Calu3 (cell line): ENCODE measurements at regions of chr6 and their contacts with region 1.

Region 1: DNA sequence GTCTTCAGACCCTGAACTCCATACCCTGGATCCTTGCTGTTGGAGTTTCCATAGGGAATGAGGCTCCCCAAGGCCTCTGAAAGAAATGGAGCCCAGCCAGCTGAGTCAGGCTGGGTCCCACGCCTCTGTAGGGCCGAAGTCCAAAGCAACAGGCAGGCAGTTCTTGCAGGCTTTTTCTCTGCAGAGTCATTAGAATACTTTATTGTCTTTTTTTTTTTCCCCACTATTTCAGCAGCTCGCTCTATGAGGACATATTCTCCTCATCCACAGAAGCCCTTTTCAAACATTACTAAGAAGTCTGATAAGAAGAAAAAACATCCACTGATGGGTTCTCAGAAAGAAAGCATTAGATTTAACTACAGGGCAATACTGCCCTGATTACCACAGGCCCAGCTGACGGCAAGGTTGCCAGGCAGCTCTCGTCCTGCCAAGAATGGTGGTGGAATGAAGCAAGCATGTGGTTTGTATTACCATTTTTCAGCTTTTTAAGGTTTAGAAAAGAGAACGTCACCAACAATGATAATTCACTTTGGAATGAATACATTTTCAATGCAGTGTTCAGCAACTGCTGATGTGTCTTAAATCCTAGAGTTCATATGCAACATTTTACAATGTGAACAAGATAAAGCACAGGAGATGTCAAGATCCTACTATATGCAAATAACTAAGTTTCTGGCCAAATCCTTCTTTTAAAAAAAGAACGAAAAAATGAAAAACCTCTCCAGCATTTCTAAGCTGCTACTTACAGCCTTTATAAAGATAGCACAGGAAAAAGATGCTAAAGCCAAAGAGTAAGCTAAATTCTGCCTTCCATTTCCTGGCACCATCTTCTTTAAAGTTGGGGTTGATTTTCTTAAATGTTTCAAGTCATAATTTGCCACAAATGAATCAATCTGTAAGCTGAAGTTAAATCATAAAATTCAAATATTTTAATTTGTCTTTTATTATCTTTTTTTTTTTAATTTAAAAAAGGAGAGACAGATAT is 223.6 kb upstream of the CITED2 start:
- DNase-seq: peak; percentile 11
- H3K4me3 Mint-ChIP-seq: no peak overlapping the region
- H3K27ac Mint-ChIP-seq: peak overlapping the region; percentile 56
- H3K4me1 Mint-ChIP-seq: peaks cover 12% of the 10 kb centered on the region
- H3K27me3 Mint-ChIP-seq: no peaks in the 10 kb centered on the region
- CTCF ChIP-seq: no peak

Region 2: GRCh38 chr6:139699335-139699734 is 101.3 kb after region 1 on chr6:
- CTCF ChIA-PET with region 1: interaction called, 3 read pairs
- intact Hi-C with region 1: loop called (anchors 10 kb)
- DNase-seq: no peak
- H3K4me3 Mint-ChIP-seq: no peak overlapping the region
- H3K27ac Mint-ChIP-seq: no peak overlapping the region
- H3K4me1 Mint-ChIP-seq: peaks cover 8% of the 10 kb centered on the region
- H3K27me3 Mint-ChIP-seq: no peaks in the 10 kb centered on the region
- CTCF ChIP-seq: no peak

Region 3: GRCh38 chr6:139736325-139736906 is 138.4 kb after region 1 on chr6:
- CTCF ChIA-PET with region 1: no interaction called
- intact Hi-C with region 1: no loop called
- DNase-seq: no peak
- H3K4me3 Mint-ChIP-seq: no peak overlapping the region
- H3K27ac Mint-ChIP-seq: no peak overlapping the region
- H3K4me1 Mint-ChIP-seq: peaks cover 16% of the 10 kb centered on the region
- H3K27me3 Mint-ChIP-seq: no peaks in the 10 kb centered on the region
- CTCF ChIP-seq: no peak

Region 4: DNA sequence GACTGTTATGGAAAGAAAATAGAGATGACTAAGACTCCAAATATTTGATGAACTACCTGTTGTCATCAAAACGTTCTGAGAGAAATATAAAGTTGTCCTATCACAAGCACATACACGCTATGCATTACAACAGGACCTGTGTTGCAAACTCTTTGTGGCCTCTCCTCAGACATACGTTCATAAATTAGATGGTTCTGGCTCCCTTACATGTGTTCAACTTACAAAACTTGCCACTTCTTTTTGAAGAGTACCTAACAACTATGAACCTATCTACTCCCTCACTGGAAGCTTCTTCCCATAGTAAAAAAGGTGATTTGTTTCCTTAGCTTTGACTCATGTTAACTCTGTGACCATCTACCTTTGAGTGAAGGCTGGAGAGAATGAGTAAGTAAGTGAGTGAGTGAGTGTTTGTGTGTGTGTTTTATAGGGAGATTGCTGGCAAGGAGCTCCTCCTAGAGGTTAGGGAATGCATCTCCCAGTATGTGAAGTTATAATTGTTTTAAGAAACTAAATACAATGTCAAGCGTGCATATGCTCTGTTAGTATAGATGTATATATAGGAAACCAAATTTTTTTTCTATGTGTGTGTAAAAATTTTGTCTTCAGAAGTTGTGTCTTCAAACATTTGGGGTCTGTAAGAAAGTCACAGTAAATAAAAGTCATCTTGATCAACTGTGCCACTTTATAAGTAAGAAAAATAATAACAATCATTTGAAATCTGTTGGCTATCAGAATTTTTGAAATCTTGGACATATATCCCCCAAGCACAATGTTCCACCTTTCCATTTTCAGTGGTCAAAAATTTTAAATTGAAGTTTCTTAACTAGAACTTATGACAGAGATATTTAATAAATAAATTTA is 1323.5 kb after region 1 on chr6:
- CTCF ChIA-PET with region 1: no interaction called
- intact Hi-C with region 1: loop called (anchors 10 kb)
- DNase-seq: peak; percentile 37
- H3K4me3 Mint-ChIP-seq: no peak overlapping the region
- H3K27ac Mint-ChIP-seq: no peak overlapping the region
- H3K4me1 Mint-ChIP-seq: peaks cover 15% of the 10 kb centered on the region
- H3K27me3 Mint-ChIP-seq: no peaks in the 10 kb centered on the region
- CTCF ChIP-seq: no peak